ENCODE measurements at regions of chr14 and their contacts with region 1.

Region 1: DNA sequence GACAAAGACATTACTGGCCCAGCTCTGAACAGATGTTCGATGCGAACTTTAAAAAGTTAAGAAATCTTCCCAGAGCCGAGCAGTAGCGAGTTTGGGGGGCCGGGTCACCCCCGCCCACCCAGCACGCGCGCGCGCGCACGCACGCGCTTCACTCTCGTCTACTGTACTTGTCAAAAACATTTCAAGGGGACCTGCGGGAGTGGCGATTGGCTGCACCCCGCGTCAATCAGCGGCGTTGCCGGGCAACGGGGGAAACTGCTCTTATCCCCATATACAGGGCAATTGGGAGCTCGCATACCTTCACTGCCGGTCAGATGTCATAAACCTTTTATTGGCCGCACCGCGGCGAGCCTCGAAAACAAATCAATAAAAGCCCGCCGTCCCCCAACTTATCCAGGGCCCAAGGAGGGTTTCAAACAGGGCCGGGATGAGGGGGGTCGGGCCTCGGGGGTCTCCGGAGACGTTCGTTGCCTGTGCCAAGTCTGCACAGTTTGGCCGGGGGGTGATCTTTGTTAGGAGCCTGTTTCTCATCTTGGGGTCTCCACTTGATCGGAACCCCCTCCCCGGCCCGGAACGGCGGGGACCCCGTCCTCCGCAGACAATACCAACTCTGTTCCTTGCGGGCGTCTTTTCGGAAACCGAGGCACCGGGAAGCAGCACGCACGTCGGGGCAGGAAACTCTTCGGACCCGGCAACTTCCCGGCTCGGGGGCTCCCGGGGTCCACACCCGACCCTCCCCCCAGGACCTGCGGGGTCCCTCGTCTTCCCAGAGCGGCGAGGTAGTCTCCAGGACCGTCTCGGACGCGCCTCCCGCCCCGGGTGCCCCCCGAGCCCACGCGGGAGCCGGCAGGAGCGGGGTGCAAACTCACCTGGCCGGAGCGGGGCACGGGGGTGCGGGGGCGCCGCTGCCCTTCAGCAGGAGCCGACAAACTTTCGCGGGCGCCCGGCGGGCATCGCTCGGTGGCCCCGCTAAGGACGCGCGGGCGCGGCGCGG is 734 bp downstream of the FOXN3 start:
- DNase-seq: peak; percentile 97 to 100 (median 99)
- ATAC-seq: peak; percentile 73
- H3K4me3 ChIP-seq: peak overlapping the region; percentile 71
- H3K4me3 Mint-ChIP-seq: peak overlapping the region; percentile 96
- H3K27ac ChIP-seq: peak overlapping the region; percentile 51 to 62
- H3K27ac Mint-ChIP-seq: peak overlapping the region; percentile 96
- H3K4me1 ChIP-seq: peaks cover 26% of the 10 kb centered on the region
- H3K4me1 Mint-ChIP-seq: peaks cover 71% of the 10 kb centered on the region
- H3K27me3 ChIP-seq: no peaks in the 10 kb centered on the region
- H3K27me3 Mint-ChIP-seq: no peaks in the 10 kb centered on the region
- CTCF ChIP-seq: no peak

Region 2: DNA sequence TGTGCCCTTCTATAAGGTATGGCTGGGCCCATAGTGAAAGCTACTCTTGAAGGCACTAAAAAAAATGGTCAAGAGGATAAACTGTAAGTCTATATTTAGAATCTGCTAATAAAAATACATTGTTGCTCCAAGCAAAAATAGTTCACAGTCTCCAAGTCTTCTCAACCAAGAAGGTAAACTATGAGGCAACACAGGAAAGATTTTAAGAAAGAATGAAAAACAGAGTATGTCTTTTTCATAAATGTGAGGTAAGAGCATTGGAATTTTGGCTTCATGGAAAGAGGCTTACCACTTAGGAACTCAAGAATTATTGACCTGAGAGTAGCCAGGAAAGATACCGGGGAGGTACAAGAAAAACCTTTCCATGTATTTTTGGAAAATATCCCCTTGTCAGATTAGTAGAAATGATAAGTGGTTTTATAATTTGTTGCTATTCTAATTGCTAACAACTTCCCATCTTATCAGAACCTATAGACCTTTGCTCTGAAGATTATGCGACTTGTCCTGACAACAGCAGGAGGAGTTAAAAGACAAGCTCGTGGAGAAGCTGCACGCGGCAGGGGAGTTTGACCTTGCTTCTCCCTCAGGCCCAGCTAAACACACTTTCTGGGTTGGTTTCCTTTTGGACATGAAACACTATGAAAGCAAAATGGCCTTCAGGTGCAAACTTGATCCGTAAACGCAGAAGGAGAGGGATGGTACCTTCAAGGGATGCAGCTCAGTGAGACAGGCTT is 237.3 kb before region 1 on chr14:
- CTCF ChIA-PET with region 1: no interaction called
- POLR2A ChIA-PET with region 1: no interaction called
- intact Hi-C with region 1: loop called (anchors 2 kb)
- DNase-seq: no peak
- ATAC-seq: no peak
- H3K4me3 ChIP-seq: no peak overlapping the region
- H3K4me3 Mint-ChIP-seq: no peak overlapping the region
- H3K27ac ChIP-seq: no peak overlapping the region
- H3K27ac Mint-ChIP-seq: peak overlapping the region; percentile 40
- H3K4me1 ChIP-seq: peaks cover 7% of the 10 kb centered on the region
- H3K4me1 Mint-ChIP-seq: peaks cover 35% of the 10 kb centered on the region
- H3K27me3 ChIP-seq: no peaks in the 10 kb centered on the region
- H3K27me3 Mint-ChIP-seq: no peaks in the 10 kb centered on the region
- CTCF ChIP-seq: no peak

Region 3: GRCh38 chr14:89365061-89365801 is 51.1 kb before region 1 on chr14:
- CTCF ChIA-PET with region 1: interaction called, 3 read pairs
- POLR2A ChIA-PET with region 1: interaction called, 7 read pairs
- intact Hi-C with region 1: loop called (anchors 2 to 5 kb)
- DNase-seq: peak; percentile 17 to 85 (median 44)
- ATAC-seq: peak; percentile 94
- H3K4me3 ChIP-seq: peak overlapping the region; percentile 27
- H3K4me3 Mint-ChIP-seq: peak overlapping the region; percentile 81
- H3K27ac ChIP-seq: peak overlapping the region; percentile 74 to 80
- H3K27ac Mint-ChIP-seq: peak overlapping the region; percentile 95
- H3K4me1 ChIP-seq: peaks cover 35% of the 10 kb centered on the region
- H3K4me1 Mint-ChIP-seq: peaks cover 62% of the 10 kb centered on the region
- H3K27me3 ChIP-seq: no peaks in the 10 kb centered on the region
- H3K27me3 Mint-ChIP-seq: no peaks in the 10 kb centered on the region
- CTCF ChIP-seq: no peak

Region 4: GRCh38 chr14:89701211-89702043 is 285.1 kb after region 1 on chr14:
- CTCF ChIA-PET with region 1: interaction called, 3 read pairs
- POLR2A ChIA-PET with region 1: no interaction called
- intact Hi-C with region 1: loop called in 1 of 2 experiments (anchors 5 kb)
- DNase-seq: peak; percentile 70 to 92 (median 80)
- ATAC-seq: peak; percentile 86
- H3K4me3 ChIP-seq: peak overlapping the region; percentile 62
- H3K4me3 Mint-ChIP-seq: peak overlapping the region; percentile 87
- H3K27ac ChIP-seq: peak overlapping the region; percentile 58 to 70
- H3K27ac Mint-ChIP-seq: peak overlapping the region; percentile 82
- H3K4me1 ChIP-seq: peaks cover 26% of the 10 kb centered on the region
- H3K4me1 Mint-ChIP-seq: peaks cover 49% of the 10 kb centered on the region
- H3K27me3 ChIP-seq: no peaks in the 10 kb centered on the region
- H3K27me3 Mint-ChIP-seq: no peaks in the 10 kb centered on the region
- CTCF ChIP-seq: no peak

Measured in CD4-positive, alpha-beta T cell (primary cell).